H1 (cell line): ENCODE measurements at regions of chr17 and their contacts with region 1.

Region 1: DNA sequence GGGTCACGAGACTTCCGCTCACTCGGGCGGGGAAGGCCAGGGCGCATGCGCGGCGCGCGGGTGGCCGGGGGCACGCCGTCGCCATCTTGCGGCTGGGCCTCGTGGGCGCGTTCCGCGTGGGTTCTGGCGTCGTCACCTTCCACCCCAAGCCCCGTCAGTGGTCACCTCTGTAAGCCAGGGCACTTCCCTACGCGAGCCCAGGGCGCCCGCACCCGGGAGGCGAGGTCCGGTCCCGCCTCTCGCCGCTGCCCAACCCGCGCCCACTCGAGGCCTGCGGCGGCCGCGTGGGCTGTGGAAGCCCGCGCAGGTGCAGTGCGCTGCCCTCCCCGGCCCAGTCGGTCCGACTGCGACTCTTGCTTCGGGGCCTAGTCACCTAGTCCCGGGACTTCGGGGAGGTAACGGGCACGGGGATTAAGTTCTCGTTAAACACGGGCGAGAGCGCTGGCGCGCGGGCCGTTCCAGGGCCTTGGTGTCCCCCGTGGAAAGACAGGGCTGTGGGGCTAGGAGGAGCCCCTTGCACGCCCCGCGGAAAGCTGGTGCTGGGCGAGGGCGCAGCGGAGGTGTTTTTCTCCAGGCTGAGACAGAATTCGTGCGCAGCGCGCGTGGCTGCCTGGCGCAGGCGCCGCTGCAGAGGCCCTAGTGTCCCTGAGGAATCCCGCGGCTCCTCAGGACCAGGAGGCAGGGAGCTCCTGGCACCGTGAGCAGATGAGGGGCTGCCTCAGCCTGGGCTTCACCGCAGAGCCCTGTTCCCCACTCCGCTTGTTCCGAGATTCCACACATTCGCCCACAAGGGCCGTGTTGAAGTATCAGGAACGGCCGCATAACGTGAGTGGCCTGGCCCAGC is 472 bp upstream of the ARHGDIA start:
- DNase-seq: peak in 1 of 2 experiments; percentile 93
- H3K4me3 ChIP-seq: peak overlapping the region; percentile 63 to 88 (median 71)
- H3K27ac ChIP-seq: peak overlapping the region; percentile 82; the same call in 1 of the 2 replicates
- H3K4me1 ChIP-seq: peaks cover 0 to 31% (median 21%) of the 10 kb centered on the region in 4 experiments; a peak in 6 of 7 replicates
- H3K27me3 ChIP-seq: no peaks in the 10 kb centered on the region
- CTCF ChIP-seq: peak in 1 of 3 experiments; percentile 2; a peak in 1 of 4 replicates
- EP300 ChIP-seq: no peak
- POLR2A ChIP-seq: peak in 1 of 2 experiments; percentile 65; a peak in 2 of 3 replicates
- RAD21 ChIP-seq: no peak

Region 2: GRCh38 chr17:81702971-81703746 is 168.4 kb before region 1 on chr17 and contains the start of gene MRPL12:
- CTCF ChIA-PET with region 1: interaction called, 3 read pairs
- POLR2A ChIA-PET with region 1: interaction called, 10 read pairs
- DNase-seq: peak; percentile 72 to 92
- H3K4me3 ChIP-seq: peak within 1 kb of the TSS; percentile 76 to 96 (median 95)
- H3K27ac ChIP-seq: peak within 1 kb of the TSS; percentile 92
- H3K4me1 ChIP-seq: peaks cover 0 to 14% (median 10%) of the 10 kb centered on the region in 4 experiments; a peak in 5 of 7 replicates
- H3K27me3 ChIP-seq: no peaks in the 10 kb centered on the region
- CTCF ChIP-seq: peak in 1 of 3 experiments; percentile 18; a peak in 1 of 4 replicates
- EP300 ChIP-seq: no peak
- POLR2A ChIP-seq: peak; percentile 83 to 99
- RAD21 ChIP-seq: no peak
- total RNA-seq, gene MRPL12: 120 and 131 TPM in 2 replicates

Region 3: DNA sequence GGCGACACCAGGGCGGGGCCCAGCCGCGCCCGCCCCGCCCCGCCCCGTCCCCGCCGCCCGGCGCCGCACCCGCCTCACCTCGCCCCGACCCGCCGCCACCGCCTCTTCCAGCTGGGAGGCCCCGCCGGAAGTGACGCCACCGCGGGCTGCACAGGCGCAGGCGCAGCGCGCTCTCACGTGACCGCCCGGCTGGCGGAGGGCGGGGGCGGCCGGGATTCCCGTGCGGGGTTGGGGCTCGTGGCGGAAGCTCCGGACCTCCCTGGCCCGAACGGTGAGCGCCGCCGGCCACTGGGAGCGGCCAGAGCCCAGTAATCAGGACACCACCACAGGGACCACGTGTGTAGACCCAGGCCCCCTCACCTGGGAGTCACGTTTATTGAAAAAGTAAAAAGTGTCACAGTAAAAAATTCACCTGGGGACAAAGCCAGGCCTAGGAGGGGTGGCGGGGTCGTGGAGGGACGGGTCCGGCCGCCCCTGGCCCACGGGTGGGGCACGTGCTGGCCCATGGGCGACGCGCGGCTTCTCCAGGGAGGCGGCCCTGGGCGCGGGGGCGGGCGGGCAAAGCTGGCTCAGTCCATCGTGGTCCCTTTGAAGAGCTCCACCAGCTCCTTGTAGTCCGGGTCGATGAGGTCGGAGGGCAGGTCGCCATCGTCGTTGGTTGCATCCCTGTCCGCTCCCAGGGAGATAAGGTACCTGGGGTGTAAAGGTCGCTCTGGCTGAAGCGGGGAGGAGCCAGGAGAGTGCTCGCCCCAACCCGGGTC is 38.3 kb before region 1 on chr17 and contains the start of gene MCRIP1:
- CTCF ChIA-PET with region 1: interaction called, 11 read pairs
- POLR2A ChIA-PET with region 1: interaction called, 16 read pairs
- DNase-seq: peak; percentile 60 to 95
- H3K4me3 ChIP-seq: peak within 1 kb of the TSS; percentile 81 to 97 (median 85)
- H3K27ac ChIP-seq: peak within 1 kb of the TSS; percentile 83
- H3K4me1 ChIP-seq: peaks cover 0 to 15% (median 8%) of the 10 kb centered on the region in 4 experiments; a peak in 4 of 7 replicates
- H3K27me3 ChIP-seq: 0 out of 7 replicates have a peak, but pooled peaks cover 0 to 2% (median 0%) of the 10 kb centered on the region in 4 experiments
- CTCF ChIP-seq: 0 out of 4 replicates have a peak, but pooled peaks of 1 of the 3 experiments have one; percentile 1
- EP300 ChIP-seq: 0 out of 3 replicates have a peak, but pooled peaks of 1 of the 2 experiments have one; percentile 27
- POLR2A ChIP-seq: peak in 1 of 2 experiments; percentile 87; a peak in 1 of 3 replicates
- RAD21 ChIP-seq: no peak
- total RNA-seq, gene MCRIP1: 103 and 115 TPM in 2 replicates

Region 4: GRCh38 chr17:81854974-81855774 is 16.4 kb before region 1 on chr17:
- CTCF ChIA-PET with region 1: interaction called, 18 read pairs
- POLR2A ChIA-PET with region 1: interaction called, 17 read pairs
- DNase-seq: no peak
- H3K4me3 ChIP-seq: no peak overlapping the region
- H3K27ac ChIP-seq: no peak overlapping the region
- H3K4me1 ChIP-seq: peaks cover 0 to 5% (median 5%) of the 10 kb centered on the region in 4 experiments; a peak in 5 of 7 replicates
- H3K27me3 ChIP-seq: no peaks in the 10 kb centered on the region; a peak in 1 of 7 replicates
- CTCF ChIP-seq: peak in 1 of 3 experiments; percentile 38; a peak in 2 of 4 replicates
- EP300 ChIP-seq: no peak
- POLR2A ChIP-seq: no peak
- RAD21 ChIP-seq: peak; percentile 51 to 60

Region 5: DNA sequence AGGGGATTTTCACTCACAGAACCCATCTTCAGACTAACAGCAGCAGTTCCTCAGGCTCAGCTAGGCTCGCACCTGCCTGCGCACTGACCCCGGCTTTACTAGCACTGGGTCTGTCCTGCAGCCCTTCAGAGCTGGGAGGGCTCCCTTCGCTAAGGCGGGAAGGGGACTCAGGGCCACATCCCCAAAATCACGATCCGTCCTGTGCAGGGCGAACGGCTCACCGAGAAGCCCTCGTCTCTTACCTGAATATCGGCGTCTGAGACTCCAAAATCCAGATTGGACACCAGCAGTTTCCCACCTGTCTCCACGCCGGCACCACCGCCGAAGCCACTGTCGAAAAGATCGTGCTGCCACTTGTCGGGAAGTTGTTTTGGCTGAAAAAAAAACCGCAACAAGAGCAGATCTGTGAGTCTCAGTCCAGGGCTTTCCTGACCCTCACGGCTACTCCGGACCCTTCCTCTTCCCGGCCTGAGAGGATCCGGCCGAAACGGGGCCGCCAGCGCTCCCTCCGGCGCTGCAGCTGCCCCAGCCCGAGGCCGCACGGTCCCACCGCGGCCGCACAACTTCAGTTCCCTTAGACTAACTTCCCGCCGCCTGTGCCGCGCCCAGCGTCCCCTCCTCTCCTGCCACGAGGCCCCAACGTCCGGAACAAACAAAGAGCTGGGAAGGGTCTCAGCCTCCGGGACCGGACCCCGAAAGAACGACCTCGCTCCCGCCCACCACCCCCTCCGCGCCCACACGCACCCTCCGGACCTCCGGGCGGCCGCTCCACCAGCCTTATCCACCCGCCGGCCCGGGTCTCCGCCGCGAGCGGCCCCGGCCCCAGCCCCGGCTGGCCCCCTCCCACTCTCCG is 19.1 kb after region 1 on chr17:
- CTCF ChIA-PET with region 1: interaction called, 24 read pairs
- POLR2A ChIA-PET with region 1: interaction called, 151 read pairs
- DNase-seq: no peak
- H3K4me3 ChIP-seq: peak overlapping the region; percentile 80 to 94 (median 88)
- H3K27ac ChIP-seq: peak overlapping the region; percentile 83
- H3K4me1 ChIP-seq: peaks cover 0 to 3% (median 2%) of the 10 kb centered on the region in 4 experiments; a peak in 5 of 7 replicates
- H3K27me3 ChIP-seq: no peaks in the 10 kb centered on the region
- CTCF ChIP-seq: no peak
- EP300 ChIP-seq: no peak
- POLR2A ChIP-seq: 0 out of 3 replicates have a peak, but pooled peaks of 1 of the 2 experiments have one; percentile 21
- RAD21 ChIP-seq: no peak

Region 6: GRCh38 chr17:81927653-81928543 is 56.3 kb after region 1 on chr17 and contains the start of gene MAFG:
- CTCF ChIA-PET with region 1: interaction called, 10 read pairs
- POLR2A ChIA-PET with region 1: interaction called, 10 read pairs
- DNase-seq: peak; percentile 70 to 95
- H3K4me3 ChIP-seq: peak within 1 kb of the TSS; percentile 67 to 89 (median 70)
- H3K27ac ChIP-seq: peak within 1 kb of the TSS; percentile 72
- H3K4me1 ChIP-seq: peaks cover 0 to 37% (median 28%) of the 10 kb centered on the region in 4 experiments; a peak in 6 of 7 replicates
- H3K27me3 ChIP-seq: peaks cover 0 to 12% (median 9%) of the 10 kb centered on the region in 4 experiments; a peak in 4 of 7 replicates
- CTCF ChIP-seq: peak; percentile 60 to 65 (median 63)
- EP300 ChIP-seq: peak in 1 of 2 experiments; percentile 22; a peak in 1 of 3 replicates
- POLR2A ChIP-seq: no peak
- RAD21 ChIP-seq: peak; percentile 42 to 69
- total RNA-seq, gene MAFG: 26.9 and 27.7 TPM in 2 replicates

Region 7: GRCh38 chr17:81967533-81968395 is 96.2 kb after region 1 on chr17:
- CTCF ChIA-PET with region 1: no interaction called
- POLR2A ChIA-PET with region 1: no interaction called
- DNase-seq: peak; percentile 43 to 81
- H3K4me3 ChIP-seq: peak overlapping the region in 1 of 4 experiments; percentile 40; a peak in 1 of 8 replicates
- H3K27ac ChIP-seq: no peak overlapping the region
- H3K4me1 ChIP-seq: peaks cover 0 to 19% (median 16%) of the 10 kb centered on the region in 4 experiments; a peak in 6 of 7 replicates
- H3K27me3 ChIP-seq: peaks cover 0 to 43% (median 35%) of the 10 kb centered on the region in 4 experiments; a peak in 6 of 7 replicates
- CTCF ChIP-seq: no peak
- EP300 ChIP-seq: peak in 1 of 2 experiments; percentile 43; a peak in 1 of 3 replicates
- POLR2A ChIP-seq: no peak
- RAD21 ChIP-seq: no peak